HAP-1 (cell line): ENCODE measurements at regions of chr2 and their contacts with region 1.

Region 1: DNA sequence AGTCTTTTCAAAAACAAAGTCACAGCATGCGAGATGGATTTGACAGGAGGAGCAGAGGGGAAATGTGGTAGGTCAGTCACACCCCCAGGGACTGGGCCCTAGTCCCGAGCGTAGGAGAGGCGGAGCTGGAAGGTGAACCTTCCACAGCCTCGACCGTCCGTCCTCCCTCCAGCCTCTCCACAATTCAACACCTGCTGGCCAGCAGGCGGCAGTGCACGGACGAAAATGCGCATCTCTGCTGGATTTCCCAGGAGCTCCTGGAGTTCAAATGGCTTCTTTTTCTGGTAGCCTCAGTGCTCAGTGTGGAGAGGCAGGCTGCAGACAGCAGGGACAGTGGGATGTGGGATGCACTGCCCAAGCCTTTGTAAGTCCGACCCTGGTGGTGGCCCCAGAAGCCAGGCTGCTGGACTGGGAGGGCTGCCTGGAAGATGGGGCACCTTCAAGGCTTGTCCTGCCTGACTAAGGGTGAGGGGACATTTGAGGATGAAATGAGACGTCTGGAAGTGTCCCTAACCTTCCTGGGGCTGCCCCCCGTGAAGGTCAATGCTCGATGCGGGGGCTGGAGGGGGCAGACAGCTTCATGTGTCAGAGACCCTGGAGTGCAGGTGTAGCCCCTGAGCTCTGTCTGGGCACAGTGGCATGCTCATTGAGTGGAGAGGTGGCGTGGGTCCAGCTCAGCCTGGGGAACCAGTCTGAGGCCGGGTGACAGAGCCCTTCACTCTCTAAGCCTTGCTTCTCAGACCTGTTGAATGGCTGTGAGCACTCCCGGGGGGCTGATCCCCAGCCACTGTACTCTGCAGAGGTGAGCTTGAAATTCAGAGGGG is 189.5 kb downstream of the TFCP2L1 start:
- DNase-seq: peak; percentile 63 to 85
- H3K4me3 ChIP-seq: no peak overlapping the region
- H3K4me1 ChIP-seq: no peaks in the 10 kb centered on the region
- H3K27me3 ChIP-seq: 0 out of 2 replicates have a peak, but pooled peaks cover 3% of the 10 kb centered on the region

Region 2: DNA sequence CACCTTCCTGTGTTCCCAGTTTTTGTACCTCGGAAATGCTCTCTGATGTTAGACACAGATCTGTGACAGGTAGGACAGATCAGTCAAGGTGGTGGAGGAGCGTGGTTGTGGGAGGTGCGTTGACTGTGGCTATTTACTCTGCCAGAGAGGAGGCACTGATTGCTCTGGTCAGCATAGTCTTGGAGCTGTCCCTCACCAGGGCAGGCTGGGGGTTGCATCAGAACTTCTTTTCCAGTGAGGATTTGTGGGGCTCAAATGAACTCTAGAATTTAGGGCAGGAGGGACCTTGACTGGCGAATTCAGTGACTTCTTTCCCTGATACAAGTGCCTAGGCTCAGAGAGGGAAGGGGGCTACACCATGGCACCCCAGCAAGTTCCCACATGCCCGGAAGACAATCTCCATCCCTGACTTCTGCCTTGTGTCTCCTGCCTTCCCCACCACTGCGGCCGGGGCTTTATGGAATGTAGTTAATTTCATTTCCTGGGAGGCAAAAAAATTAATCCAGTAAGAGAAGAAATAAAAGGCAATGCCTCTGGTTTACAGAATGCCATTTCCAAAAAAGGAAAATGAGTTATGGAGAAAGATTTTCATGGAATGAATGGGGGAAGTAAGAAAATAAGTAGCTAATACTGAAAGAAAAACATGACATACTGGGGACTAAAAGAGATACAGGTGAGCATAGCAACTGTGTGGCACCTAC is 615.2 kb after region 1 on chr2:
- in situ Hi-C with region 1: loop called (anchors 10 kb)
- DNase-seq: no peak
- H3K4me3 ChIP-seq: no peak overlapping the region
- H3K4me1 ChIP-seq: peaks cover 2% of the 10 kb centered on the region; the same call in 1 of the 2 replicates
- H3K27me3 ChIP-seq: no peaks in the 10 kb centered on the region